CD8-positive, alpha-beta T cell (primary cell): ENCODE measurements at regions of chr6 and their contacts with region 1.

Region 1: DNA sequence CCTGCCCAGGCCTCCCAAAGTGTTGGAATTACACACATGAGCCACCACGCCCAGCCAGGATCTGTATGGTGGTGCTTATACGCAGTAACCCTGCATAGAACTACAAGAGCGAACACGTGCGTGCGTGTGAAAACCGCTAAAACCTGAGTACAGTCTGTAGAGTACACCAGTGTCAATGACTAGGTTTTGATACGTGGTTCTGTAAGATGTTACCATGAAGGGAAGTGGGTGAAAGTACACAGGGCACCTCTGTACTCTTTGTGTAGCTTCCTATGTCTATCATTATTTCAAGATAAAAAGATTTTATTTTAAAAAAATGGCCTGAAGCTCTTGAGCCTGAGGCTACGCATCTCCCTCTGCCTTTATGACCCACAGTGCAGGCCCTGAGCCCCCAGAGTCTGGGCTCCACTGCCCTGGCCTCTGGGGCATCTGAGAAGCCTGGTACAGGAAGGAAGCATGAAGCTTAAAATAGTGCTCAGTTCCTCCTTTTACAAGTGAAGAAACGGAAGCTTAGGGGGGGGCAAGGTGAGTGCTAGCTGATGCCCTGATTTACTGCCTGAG is 21.6 kb downstream of the LY86 start:
- DNase-seq: peak in 7 of 9 experiments; percentile 26 to 86 (median 64)
- ATAC-seq: peak; percentile 69
- H3K4me3 ChIP-seq: peak overlapping the region in 1 of 2 experiments; percentile 3
- H3K4me3 Mint-ChIP-seq: peak overlapping the region; percentile 27
- H3K27ac ChIP-seq: peak overlapping the region; percentile 55 to 70
- H3K27ac Mint-ChIP-seq: peak overlapping the region; percentile 96
- H3K4me1 ChIP-seq: peaks cover 67% of the 10 kb centered on the region
- H3K4me1 Mint-ChIP-seq: peaks cover 69% of the 10 kb centered on the region
- H3K27me3 ChIP-seq: no peaks in the 10 kb centered on the region
- H3K27me3 Mint-ChIP-seq: no peaks in the 10 kb centered on the region
- CTCF ChIP-seq: no peak

Region 2: DNA sequence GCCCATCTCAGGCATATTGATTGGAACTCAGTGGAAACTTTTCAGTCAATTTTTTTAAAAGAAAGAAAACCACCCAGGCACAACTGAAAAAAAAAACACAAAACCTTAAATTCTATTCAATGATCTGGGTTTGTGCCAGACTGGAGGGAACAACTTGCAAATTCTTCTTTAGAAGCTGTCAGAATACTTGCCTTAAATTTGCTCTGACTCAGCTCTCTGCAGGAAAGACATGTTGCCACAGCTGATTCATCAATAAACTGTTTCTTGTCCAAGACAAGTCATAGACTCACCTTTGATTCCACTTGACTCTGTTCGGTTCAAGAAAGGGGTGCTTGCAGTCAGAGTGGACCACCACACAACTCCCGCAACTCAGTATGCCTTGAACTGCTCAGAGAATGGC is 171.8 kb before region 1 on chr6:
- CTCF ChIA-PET with region 1: no interaction called
- POLR2A ChIA-PET with region 1: no interaction called
- intact Hi-C with region 1: no loop called
- DNase-seq: no peak
- ATAC-seq: no peak
- H3K4me3 ChIP-seq: no peak overlapping the region
- H3K4me3 Mint-ChIP-seq: no peak overlapping the region
- H3K27ac ChIP-seq: no peak overlapping the region
- H3K27ac Mint-ChIP-seq: no peak overlapping the region
- H3K4me1 ChIP-seq: no peaks in the 10 kb centered on the region
- H3K4me1 Mint-ChIP-seq: no peaks in the 10 kb centered on the region
- H3K27me3 ChIP-seq: no peaks in the 10 kb centered on the region
- H3K27me3 Mint-ChIP-seq: no peaks in the 10 kb centered on the region
- CTCF ChIP-seq: no peak

Region 3: GRCh38 chr6:6516666-6517458 is 93.2 kb before region 1 on chr6:
- CTCF ChIA-PET with region 1: no interaction called
- POLR2A ChIA-PET with region 1: no interaction called
- intact Hi-C with region 1: no loop called
- DNase-seq: peak in 3 of 9 experiments; percentile 7 to 43 (median 10)
- ATAC-seq: no peak
- H3K4me3 ChIP-seq: no peak overlapping the region
- H3K4me3 Mint-ChIP-seq: peak overlapping the region; percentile 70
- H3K27ac ChIP-seq: no peak overlapping the region
- H3K27ac Mint-ChIP-seq: peak overlapping the region; percentile 93
- H3K4me1 ChIP-seq: peaks cover 48% of the 10 kb centered on the region
- H3K4me1 Mint-ChIP-seq: peaks cover 62% of the 10 kb centered on the region
- H3K27me3 ChIP-seq: no peaks in the 10 kb centered on the region
- H3K27me3 Mint-ChIP-seq: peaks cover 14% of the 10 kb centered on the region
- CTCF ChIP-seq: no peak

Region 4: DNA sequence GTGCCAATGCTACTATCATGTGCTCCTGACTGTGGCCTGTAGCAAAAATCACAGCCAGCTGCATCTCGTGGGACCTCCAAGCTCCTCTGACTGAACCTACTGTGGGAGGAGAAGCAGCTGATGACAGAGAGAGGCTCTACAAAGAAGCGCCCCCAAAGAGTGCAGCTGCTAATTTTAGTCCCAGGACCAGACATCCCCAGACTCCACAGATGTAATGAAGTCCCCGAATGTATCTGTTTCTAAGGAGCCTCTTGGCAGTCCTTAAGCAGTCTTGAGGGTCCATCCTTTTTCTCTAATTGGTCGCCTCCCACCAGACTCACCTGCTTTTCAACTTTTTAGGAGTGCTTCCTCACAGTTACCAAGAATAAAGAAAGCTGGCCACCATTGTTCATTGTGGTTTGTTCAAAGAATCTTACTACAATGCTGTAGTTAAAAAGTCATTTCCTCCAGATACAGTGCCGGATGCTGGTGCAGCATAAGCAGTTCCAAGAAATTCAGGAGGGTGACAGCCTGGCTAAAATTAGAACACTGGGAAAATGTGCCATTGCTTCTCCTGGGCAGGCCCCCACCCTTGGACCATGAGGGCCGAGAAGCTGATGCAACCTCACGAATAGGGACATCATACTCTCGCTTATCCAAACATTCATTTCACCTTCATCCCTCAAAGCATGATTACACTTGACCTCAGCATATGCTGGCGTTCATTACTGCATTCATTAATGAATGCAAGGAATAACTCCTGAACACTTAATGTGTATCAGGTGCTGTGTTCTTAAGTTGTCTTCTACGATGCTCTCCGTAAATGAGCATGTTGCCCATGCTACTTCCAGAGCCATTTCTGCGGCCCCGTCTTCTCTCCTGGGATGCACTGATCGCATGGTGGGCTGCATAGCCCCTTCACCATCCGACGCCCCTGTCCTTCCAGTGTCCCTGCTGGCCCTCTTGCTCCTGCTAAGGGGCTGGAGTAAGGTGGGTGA is 44.8 kb after region 1 on chr6:
- CTCF ChIA-PET with region 1: interaction called, 3 read pairs
- POLR2A ChIA-PET with region 1: interaction called, 13 read pairs
- intact Hi-C with region 1: loop called (anchors 2 kb)
- DNase-seq: peak in 2 of 9 experiments; percentile 51 to 61
- ATAC-seq: peak; percentile 54
- H3K4me3 ChIP-seq: peak overlapping the region in 1 of 2 experiments; percentile 18
- H3K4me3 Mint-ChIP-seq: peak overlapping the region; percentile 44
- H3K27ac ChIP-seq: peak overlapping the region; percentile 4 to 13
- H3K27ac Mint-ChIP-seq: peak overlapping the region; percentile 86
- H3K4me1 ChIP-seq: peaks cover 65% of the 10 kb centered on the region
- H3K4me1 Mint-ChIP-seq: peaks cover 71% of the 10 kb centered on the region
- H3K27me3 ChIP-seq: no peaks in the 10 kb centered on the region
- H3K27me3 Mint-ChIP-seq: no peaks in the 10 kb centered on the region
- CTCF ChIP-seq: no peak

Region 5: GRCh38 chr6:6661684-6662083 is 51.6 kb after region 1 on chr6:
- CTCF ChIA-PET with region 1: interaction called, 3 read pairs
- POLR2A ChIA-PET with region 1: interaction called, 13 read pairs
- intact Hi-C with region 1: loop called in 1 of 2 experiments (anchors 2 kb)
- DNase-seq: no peak
- ATAC-seq: no peak
- H3K4me3 ChIP-seq: no peak overlapping the region
- H3K4me3 Mint-ChIP-seq: no peak overlapping the region
- H3K27ac ChIP-seq: no peak overlapping the region
- H3K27ac Mint-ChIP-seq: no peak overlapping the region
- H3K4me1 ChIP-seq: peaks cover 34% of the 10 kb centered on the region
- H3K4me1 Mint-ChIP-seq: peaks cover 56% of the 10 kb centered on the region
- H3K27me3 ChIP-seq: no peaks in the 10 kb centered on the region
- H3K27me3 Mint-ChIP-seq: no peaks in the 10 kb centered on the region
- CTCF ChIP-seq: no peak

Region 6: GRCh38 chr6:7243179-7243981 is 633.3 kb after region 1 on chr6:
- CTCF ChIA-PET with region 1: no interaction called
- POLR2A ChIA-PET with region 1: no interaction called
- intact Hi-C with region 1: no loop called
- DNase-seq: peak in 7 of 9 experiments; percentile 8 to 73 (median 52)
- ATAC-seq: peak; percentile 88
- H3K4me3 ChIP-seq: no peak overlapping the region
- H3K4me3 Mint-ChIP-seq: no peak overlapping the region
- H3K27ac ChIP-seq: peak overlapping the region in 1 of 2 experiments; percentile 12
- H3K27ac Mint-ChIP-seq: peak overlapping the region; percentile 90
- H3K4me1 ChIP-seq: no peaks in the 10 kb centered on the region
- H3K4me1 Mint-ChIP-seq: peaks cover 15% of the 10 kb centered on the region
- H3K27me3 ChIP-seq: no peaks in the 10 kb centered on the region
- H3K27me3 Mint-ChIP-seq: no peaks in the 10 kb centered on the region
- CTCF ChIP-seq: peak; percentile 91